ENCODE measurements at regions of chr5 and their contacts with region 1.

Region 1: GRCh38 chr5:35902046-35902676 is 36.3 kb downstream of the CAPSL start:
- DNase-seq: peak; percentile 42
- ATAC-seq: peak; percentile 60
- H3K4me3 Mint-ChIP-seq: peak overlapping the region; percentile 5
- H3K27ac Mint-ChIP-seq: peak overlapping the region; percentile 81
- H3K4me1 Mint-ChIP-seq: peaks cover 85% of the 10 kb centered on the region
- H3K27me3 Mint-ChIP-seq: no peaks in the 10 kb centered on the region

Region 2: DNA sequence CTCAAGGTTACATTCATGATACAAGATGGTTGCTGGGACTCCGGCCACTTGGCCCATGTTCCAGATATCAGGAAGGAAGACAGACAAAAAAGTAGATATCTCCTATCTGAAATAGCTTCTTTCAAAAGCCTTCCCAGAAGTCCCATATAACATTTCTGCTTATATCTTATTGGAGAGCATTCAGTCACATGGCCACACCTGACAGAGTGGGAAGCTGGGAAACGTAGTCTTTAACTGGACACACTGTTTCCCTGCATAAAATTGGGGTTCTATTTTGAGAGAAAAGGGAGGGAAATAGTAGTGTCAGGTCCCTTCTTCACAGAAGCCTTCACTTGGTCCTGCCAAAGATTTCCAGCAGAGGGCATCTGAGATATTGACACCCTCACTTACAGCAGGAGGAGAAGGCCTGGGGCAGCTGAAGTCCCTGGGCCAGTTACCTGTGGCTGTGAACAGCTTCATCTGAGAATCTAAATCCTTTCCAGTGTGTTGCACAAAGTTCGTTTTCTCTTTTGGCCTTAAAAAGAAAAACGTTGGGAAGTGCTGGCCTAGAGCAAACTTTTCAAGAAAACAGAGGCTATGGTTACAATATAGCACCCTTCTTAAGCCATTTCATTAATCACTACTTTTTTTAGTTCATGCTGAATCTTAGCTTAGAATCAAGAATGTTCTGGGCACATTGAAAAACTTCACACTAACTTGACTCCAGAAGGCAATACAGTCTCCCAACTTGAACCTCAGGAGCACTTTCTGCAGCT is 251.0 kb before region 1 on chr5:
- CTCF ChIA-PET with region 1: interaction called, 16 read pairs
- POLR2A ChIA-PET with region 1: no interaction called
- intact Hi-C with region 1: no loop called
- DNase-seq: peak; percentile 76
- ATAC-seq: peak; percentile 97
- H3K4me3 Mint-ChIP-seq: no peak overlapping the region
- H3K27ac Mint-ChIP-seq: peak overlapping the region; percentile 64
- H3K4me1 Mint-ChIP-seq: peaks cover 25% of the 10 kb centered on the region
- H3K27me3 Mint-ChIP-seq: no peaks in the 10 kb centered on the region

Region 3: GRCh38 chr5:35785601-35786085 is 116.5 kb before region 1 on chr5:
- CTCF ChIA-PET with region 1: interaction called, 4 read pairs
- POLR2A ChIA-PET with region 1: interaction called, 3 read pairs
- intact Hi-C with region 1: loop called (anchors 2 kb)
- DNase-seq: peak; percentile 73
- ATAC-seq: peak; percentile 84
- H3K4me3 Mint-ChIP-seq: peak overlapping the region; percentile 43
- H3K27ac Mint-ChIP-seq: peak overlapping the region; percentile 96
- H3K4me1 Mint-ChIP-seq: peaks cover 89% of the 10 kb centered on the region
- H3K27me3 Mint-ChIP-seq: no peaks in the 10 kb centered on the region

Region 4: GRCh38 chr5:35815089-35815936 is 86.8 kb before region 1 on chr5:
- CTCF ChIA-PET with region 1: interaction called, 4 read pairs
- POLR2A ChIA-PET with region 1: no interaction called
- intact Hi-C with region 1: loop called (anchors 1 to 2 kb)
- DNase-seq: peak; percentile 72
- ATAC-seq: peak; percentile 41
- H3K4me3 Mint-ChIP-seq: no peak overlapping the region
- H3K27ac Mint-ChIP-seq: no peak overlapping the region
- H3K4me1 Mint-ChIP-seq: peaks cover 56% of the 10 kb centered on the region
- H3K27me3 Mint-ChIP-seq: no peaks in the 10 kb centered on the region

Region 5: DNA sequence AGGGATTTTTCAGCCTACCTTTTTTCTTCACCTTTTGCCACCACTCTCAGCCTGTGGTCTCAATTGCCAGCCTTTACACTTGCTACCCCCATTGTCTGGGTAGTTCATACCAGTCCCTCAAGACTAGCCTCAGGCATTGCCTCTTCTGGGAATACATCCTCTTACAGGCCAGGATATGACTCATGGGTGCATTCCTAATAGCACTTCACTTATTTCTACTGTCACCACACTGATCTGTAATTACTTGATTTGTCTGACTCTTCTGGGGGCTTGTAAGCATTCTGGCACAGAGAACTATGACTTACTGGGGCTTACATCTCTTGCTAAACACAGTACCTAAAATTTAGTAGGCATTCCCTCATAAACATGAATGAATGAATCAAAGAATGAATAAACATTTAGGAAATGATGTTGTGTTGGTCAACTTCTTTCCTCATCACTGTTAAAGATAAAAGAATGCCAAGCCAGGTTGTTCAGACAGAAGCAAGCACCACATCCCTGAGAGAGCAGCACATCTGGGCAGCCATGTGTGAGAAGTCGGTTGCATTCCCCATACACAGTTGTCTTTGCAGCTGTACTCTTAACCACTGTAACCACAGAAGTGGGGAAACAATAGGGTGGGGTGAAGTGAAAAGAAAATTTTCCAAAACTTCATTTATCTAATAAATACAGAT is 17.9 kb before region 1 on chr5:
- CTCF ChIA-PET with region 1: interaction called, 7 read pairs
- POLR2A ChIA-PET with region 1: no interaction called
- intact Hi-C with region 1: loop called (anchors 2 kb)
- DNase-seq: no peak
- ATAC-seq: peak; percentile 77
- H3K4me3 Mint-ChIP-seq: peak overlapping the region; percentile 24
- H3K27ac Mint-ChIP-seq: peak overlapping the region; percentile 92
- H3K4me1 Mint-ChIP-seq: peaks cover 41% of the 10 kb centered on the region
- H3K27me3 Mint-ChIP-seq: no peaks in the 10 kb centered on the region